Endothelial cell of umbilical vein (primary cell): ENCODE measurements at regions of chr6 and their contacts with region 1.

Region 1: GRCh38 chr6:142155895-142156757 is 9.1 kb downstream of the VTA1 start:
- DNase-seq: peak; percentile 76
- H3K4me3 ChIP-seq: peak overlapping the region in 1 of 3 experiments; percentile 13
- H3K27ac ChIP-seq: peak overlapping the region; percentile 74
- H3K4me1 ChIP-seq: peaks cover 38% of the 10 kb centered on the region
- H3K27me3 ChIP-seq: no peaks in the 10 kb centered on the region
- CTCF ChIP-seq: peak; percentile 7 to 24
- POLR2A ChIP-seq: no peak

Region 2: DNA sequence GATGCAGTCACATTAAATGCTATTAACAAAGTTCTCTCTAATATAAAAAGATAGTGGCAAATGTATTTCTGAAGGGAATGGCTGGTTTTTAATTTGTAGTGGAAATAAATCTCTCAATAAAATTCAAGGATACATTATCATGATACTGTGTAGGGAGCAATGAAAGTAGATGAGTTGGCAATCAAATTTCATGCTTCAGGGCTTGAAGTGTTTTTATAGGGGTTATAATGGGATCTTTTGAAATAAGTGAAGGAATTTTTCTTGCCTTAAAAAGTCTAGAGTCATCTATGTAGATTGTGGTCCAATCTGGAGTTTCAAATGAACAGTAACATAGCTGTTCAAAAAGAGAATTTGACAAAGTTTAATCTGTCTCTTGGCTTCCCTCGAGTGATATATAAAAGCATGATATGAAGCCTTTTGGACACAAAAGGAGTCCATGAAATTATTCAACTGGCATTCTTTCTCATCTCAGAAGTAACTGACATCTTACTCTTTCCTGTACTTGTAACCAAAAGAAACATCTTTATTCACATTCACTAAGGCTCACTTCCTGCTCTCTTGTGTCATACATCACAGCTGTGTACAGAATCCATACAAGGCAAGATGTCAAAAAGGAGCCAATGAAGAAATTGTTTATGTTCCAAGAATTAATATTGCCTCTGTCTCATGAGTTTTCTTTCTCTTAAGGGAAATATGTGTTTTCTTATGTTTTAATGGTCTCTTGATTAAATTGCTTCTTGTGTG is 614.4 kb before region 1 on chr6:
- CTCF ChIA-PET with region 1: no interaction called
- POLR2A ChIA-PET with region 1: no interaction called
- dilution Hi-C with region 1: no loop called
- intact Hi-C with region 1: no loop called
- DNase-seq: peak; percentile 44
- H3K4me3 ChIP-seq: no peak overlapping the region
- H3K27ac ChIP-seq: peak overlapping the region; percentile 23
- H3K4me1 ChIP-seq: peaks cover 5% of the 10 kb centered on the region
- H3K27me3 ChIP-seq: no peaks in the 10 kb centered on the region
- CTCF ChIP-seq: no peak
- POLR2A ChIP-seq: no peak

Region 3: DNA sequence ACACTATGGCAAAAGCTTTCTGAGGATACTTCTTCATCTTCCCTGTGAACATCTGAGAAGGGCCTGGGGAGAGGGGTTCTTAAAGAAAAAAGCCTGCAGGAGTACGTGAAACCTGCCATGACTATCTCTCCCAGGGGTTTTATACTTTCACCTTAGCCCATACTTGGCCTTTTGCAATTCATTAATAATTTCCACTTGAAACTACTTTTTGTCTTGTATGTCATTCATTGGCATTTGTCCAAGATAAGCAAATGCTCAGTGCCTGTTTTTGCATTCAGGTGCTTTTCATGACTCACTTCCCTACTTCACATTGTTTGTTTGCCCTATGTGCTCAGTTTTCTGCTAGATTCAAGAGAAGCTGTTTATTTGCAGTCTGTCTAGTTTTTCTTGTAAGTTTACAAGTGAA is 603.6 kb before region 1 on chr6:
- CTCF ChIA-PET with region 1: no interaction called
- POLR2A ChIA-PET with region 1: no interaction called
- dilution Hi-C with region 1: no loop called
- intact Hi-C with region 1: no loop called
- DNase-seq: peak; percentile 98
- H3K4me3 ChIP-seq: peak overlapping the region in 1 of 3 experiments; percentile 30
- H3K27ac ChIP-seq: peak overlapping the region; percentile 80
- H3K4me1 ChIP-seq: peaks cover 17% of the 10 kb centered on the region
- H3K27me3 ChIP-seq: no peaks in the 10 kb centered on the region
- CTCF ChIP-seq: no peak
- POLR2A ChIP-seq: peak; percentile 60

Region 4: GRCh38 chr6:142167486-142167885 is 11.4 kb after region 1 on chr6:
- CTCF ChIA-PET with region 1: interaction called, 34 read pairs
- POLR2A ChIA-PET with region 1: no interaction called
- dilution Hi-C with region 1: no loop called
- intact Hi-C with region 1: no loop called
- DNase-seq: no peak
- H3K4me3 ChIP-seq: no peak overlapping the region
- H3K27ac ChIP-seq: peak overlapping the region; percentile 71
- H3K4me1 ChIP-seq: peaks cover 17% of the 10 kb centered on the region
- H3K27me3 ChIP-seq: no peaks in the 10 kb centered on the region
- CTCF ChIP-seq: no peak
- POLR2A ChIP-seq: no peak

Region 5: DNA sequence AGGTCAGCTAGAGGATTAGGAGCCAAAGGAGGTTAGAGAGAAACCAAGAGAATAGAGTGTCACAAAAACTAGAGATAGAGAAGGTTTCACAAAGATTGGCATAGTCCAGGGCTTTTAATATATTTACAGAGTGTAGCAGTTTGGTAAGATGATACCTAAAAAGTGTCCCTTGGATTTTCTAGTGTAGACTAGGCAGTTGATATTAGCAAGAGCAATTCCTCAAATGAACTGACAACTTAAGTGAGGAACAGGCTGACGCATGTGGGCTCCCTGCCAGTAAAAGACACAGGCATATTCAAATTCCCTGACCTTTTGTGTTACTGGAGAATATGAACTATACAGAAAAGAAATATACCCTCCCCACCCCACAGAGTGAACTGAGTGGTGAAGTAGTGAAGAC is 31.1 kb after region 1 on chr6:
- CTCF ChIA-PET with region 1: interaction called, 22 read pairs
- POLR2A ChIA-PET with region 1: no interaction called
- dilution Hi-C with region 1: no loop called
- intact Hi-C with region 1: no loop called
- DNase-seq: peak; percentile 78
- H3K4me3 ChIP-seq: no peak overlapping the region
- H3K27ac ChIP-seq: no peak overlapping the region
- H3K4me1 ChIP-seq: peaks cover 2% of the 10 kb centered on the region
- H3K27me3 ChIP-seq: no peaks in the 10 kb centered on the region
- CTCF ChIP-seq: no peak
- POLR2A ChIP-seq: no peak

Region 6: GRCh38 chr6:142200846-142201628 is 44.9 kb after region 1 on chr6:
- CTCF ChIA-PET with region 1: interaction called, 40 read pairs
- POLR2A ChIA-PET with region 1: no interaction called
- dilution Hi-C with region 1: no loop called
- intact Hi-C with region 1: no loop called
- DNase-seq: peak; percentile 83
- H3K4me3 ChIP-seq: no peak overlapping the region
- H3K27ac ChIP-seq: peak overlapping the region; percentile 78
- H3K4me1 ChIP-seq: peaks cover 38% of the 10 kb centered on the region
- H3K27me3 ChIP-seq: no peaks in the 10 kb centered on the region
- CTCF ChIP-seq: no peak
- POLR2A ChIP-seq: no peak

Region 7: GRCh38 chr6:142265476-142265875 is 109.3 kb after region 1 on chr6:
- CTCF ChIA-PET with region 1: no interaction called
- POLR2A ChIA-PET with region 1: no interaction called
- dilution Hi-C with region 1: no loop called
- intact Hi-C with region 1: no loop called
- DNase-seq: no peak
- H3K4me3 ChIP-seq: no peak overlapping the region
- H3K27ac ChIP-seq: no peak overlapping the region
- H3K4me1 ChIP-seq: peaks cover 3% of the 10 kb centered on the region
- H3K27me3 ChIP-seq: no peaks in the 10 kb centered on the region
- CTCF ChIP-seq: no peak
- POLR2A ChIP-seq: no peak

Region 8: DNA sequence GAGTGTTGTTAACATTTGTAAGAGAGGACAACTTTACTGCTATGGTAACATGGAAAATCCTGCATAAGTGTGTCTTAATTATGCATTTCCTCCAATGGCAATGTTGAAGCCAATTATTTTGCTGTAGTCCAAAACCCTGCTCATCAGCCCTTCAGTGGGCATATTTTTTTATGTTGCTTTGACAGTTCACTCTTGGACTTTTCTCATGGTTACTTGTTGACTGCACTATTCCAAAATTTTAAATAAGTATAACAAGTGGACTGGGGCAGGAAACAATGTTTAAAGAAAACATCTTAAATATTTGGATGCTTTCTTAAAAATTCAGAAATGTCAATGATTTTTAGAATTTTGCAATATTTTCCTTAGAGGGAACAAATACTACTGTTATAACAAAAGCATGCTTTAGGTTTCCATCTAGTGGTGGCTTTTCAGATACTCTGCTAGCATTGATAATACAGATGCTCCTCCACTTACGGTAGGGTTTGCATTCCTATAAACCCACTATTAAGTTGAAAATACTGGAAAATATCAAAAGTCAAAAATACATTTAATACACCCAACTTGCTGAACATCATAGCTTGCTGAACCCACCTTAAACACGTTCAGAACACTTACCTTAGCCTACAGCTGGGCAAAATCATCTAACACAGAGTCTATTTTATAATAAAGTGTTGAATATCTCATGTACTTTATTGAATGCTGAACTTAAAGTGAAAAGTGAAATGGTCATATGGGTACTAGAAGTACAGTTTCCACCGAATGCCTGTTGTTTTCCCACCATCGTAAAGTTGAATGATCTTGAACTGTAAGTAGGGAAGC is 232.1 kb after region 1 on chr6:
- CTCF ChIA-PET with region 1: interaction called, 53 read pairs
- POLR2A ChIA-PET with region 1: no interaction called
- dilution Hi-C with region 1: no loop called
- intact Hi-C with region 1: loop called (anchors 2 kb)
- DNase-seq: peak; percentile 81
- H3K4me3 ChIP-seq: no peak overlapping the region
- H3K27ac ChIP-seq: peak overlapping the region; percentile 11
- H3K4me1 ChIP-seq: peaks cover 7% of the 10 kb centered on the region
- H3K27me3 ChIP-seq: no peaks in the 10 kb centered on the region
- CTCF ChIP-seq: peak; percentile 47 to 50
- POLR2A ChIP-seq: no peak

Region 9: DNA sequence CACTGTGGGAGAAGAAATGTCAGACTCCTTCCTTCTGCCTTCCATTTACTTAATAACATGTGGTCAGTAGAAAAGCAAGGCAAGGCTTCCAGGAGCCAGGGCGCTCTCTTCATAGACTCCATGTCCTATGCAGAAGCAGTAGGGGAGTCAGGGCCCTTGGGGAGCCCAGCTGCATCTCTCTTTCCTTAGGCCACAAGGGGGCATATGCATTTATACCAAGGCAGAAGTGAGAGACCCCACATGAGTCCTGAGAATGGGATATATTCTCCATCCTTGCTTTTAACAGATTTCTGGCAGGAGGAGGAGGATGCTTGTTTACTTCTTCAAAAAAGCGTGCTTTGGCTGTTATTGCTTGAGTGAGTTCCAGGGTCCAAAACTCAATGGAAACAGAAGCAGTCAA is 590.4 kb after region 1 on chr6:
- CTCF ChIA-PET with region 1: no interaction called
- POLR2A ChIA-PET with region 1: no interaction called
- dilution Hi-C with region 1: no loop called
- intact Hi-C with region 1: no loop called
- DNase-seq: peak; percentile 55
- H3K4me3 ChIP-seq: no peak overlapping the region
- H3K27ac ChIP-seq: no peak overlapping the region
- H3K4me1 ChIP-seq: no peaks in the 10 kb centered on the region
- H3K27me3 ChIP-seq: no peaks in the 10 kb centered on the region
- CTCF ChIP-seq: peak; percentile 46 to 50
- POLR2A ChIP-seq: no peak